CD8-positive, alpha-beta T cell (primary cell): ENCODE measurements at regions of chr9 and their contacts with region 1.

Region 1: DNA sequence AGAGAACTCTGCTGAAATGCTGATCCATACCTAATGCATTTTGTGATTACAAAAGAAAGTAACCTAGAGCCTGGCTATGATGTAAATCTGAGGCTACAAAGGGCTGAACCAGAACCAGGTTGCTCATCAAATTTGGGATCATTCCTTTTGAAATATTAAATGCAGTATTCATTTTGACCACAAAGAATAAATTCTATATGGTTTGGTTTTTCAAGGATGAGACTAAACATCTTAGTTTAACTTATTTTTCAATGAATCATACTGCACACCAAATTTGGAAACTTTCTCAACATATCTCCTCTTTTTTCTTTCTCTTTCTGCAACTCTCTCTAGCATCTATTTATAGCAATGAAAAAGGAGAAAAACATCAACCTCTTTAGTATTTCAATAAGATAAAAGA is 46.5 kb downstream of the CEMIP2 start:
- DNase-seq: no peak
- ATAC-seq: no peak
- H3K4me3 ChIP-seq: no peak overlapping the region
- H3K4me3 Mint-ChIP-seq: no peak overlapping the region
- H3K27ac ChIP-seq: no peak overlapping the region
- H3K27ac Mint-ChIP-seq: no peak overlapping the region
- H3K4me1 ChIP-seq: no peaks in the 10 kb centered on the region
- H3K4me1 Mint-ChIP-seq: peaks cover 7% of the 10 kb centered on the region
- H3K27me3 ChIP-seq: no peaks in the 10 kb centered on the region
- H3K27me3 Mint-ChIP-seq: no peaks in the 10 kb centered on the region
- CTCF ChIP-seq: no peak

Region 2: GRCh38 chr9:71571186-71571585 is 150.7 kb before region 1 on chr9:
- CTCF ChIA-PET with region 1: no interaction called
- POLR2A ChIA-PET with region 1: no interaction called
- intact Hi-C with region 1: no loop called
- DNase-seq: no peak
- ATAC-seq: no peak
- H3K4me3 ChIP-seq: no peak overlapping the region
- H3K4me3 Mint-ChIP-seq: no peak overlapping the region
- H3K27ac ChIP-seq: no peak overlapping the region
- H3K27ac Mint-ChIP-seq: no peak overlapping the region
- H3K4me1 ChIP-seq: no peaks in the 10 kb centered on the region
- H3K4me1 Mint-ChIP-seq: no peaks in the 10 kb centered on the region
- H3K27me3 ChIP-seq: no peaks in the 10 kb centered on the region
- H3K27me3 Mint-ChIP-seq: peaks cover 8% of the 10 kb centered on the region
- CTCF ChIP-seq: no peak

Region 3: GRCh38 chr9:71685394-71685793 is 36.5 kb before region 1 on chr9:
- CTCF ChIA-PET with region 1: no interaction called
- POLR2A ChIA-PET with region 1: no interaction called
- intact Hi-C with region 1: loop called in 1 of 2 experiments (anchors 5 kb)
- DNase-seq: peak in 7 of 9 experiments; percentile 13 to 81 (median 40)
- ATAC-seq: peak; percentile 97
- H3K4me3 ChIP-seq: no peak overlapping the region
- H3K4me3 Mint-ChIP-seq: peak overlapping the region; percentile 59
- H3K27ac ChIP-seq: peak overlapping the region in 1 of 2 experiments; percentile 29
- H3K27ac Mint-ChIP-seq: peak overlapping the region; percentile 83
- H3K4me1 ChIP-seq: peaks cover 26% of the 10 kb centered on the region
- H3K4me1 Mint-ChIP-seq: peaks cover 49% of the 10 kb centered on the region
- H3K27me3 ChIP-seq: no peaks in the 10 kb centered on the region
- H3K27me3 Mint-ChIP-seq: no peaks in the 10 kb centered on the region
- CTCF ChIP-seq: no peak